ENCODE measurements at regions of chr12 and their contacts with region 1.

Region 1: DNA sequence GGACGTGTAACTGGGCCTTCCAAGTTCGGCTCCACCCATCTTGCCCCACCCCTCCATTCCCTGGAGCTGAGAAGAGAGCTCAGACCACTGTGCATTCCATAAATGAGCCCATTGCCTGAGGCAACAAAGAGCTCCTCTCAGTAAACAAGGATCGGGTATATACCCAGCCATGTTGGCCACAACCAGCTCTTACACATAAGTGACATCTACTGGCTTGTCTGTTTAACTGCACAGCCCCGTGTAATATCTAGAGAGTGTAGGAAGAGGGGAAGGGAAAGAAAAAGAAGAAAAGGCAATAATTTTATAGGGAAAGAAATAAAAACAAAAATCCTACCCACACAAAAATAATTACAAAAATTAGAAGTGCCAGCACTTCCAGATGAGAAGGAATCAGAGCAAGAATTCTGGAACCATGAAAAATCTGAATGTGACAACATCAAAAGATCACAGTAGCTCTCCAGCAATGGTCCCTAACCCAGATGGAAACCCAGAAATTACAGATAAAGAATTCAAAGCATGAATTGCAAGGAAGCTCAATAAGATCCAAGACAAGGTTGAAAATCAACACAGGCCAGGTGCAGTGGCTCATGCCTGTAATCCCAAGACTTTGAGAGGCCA is 308.1 kb downstream of the RPAP3 start:
- DNase-seq: peak; percentile 73
- ATAC-seq: peak; percentile 78
- H3K4me3 ChIP-seq: peak overlapping the region in 3 of 5 experiments; percentile 15 to 39 (median 30)
- H3K4me3 Mint-ChIP-seq: peak overlapping the region; percentile 63
- H3K27ac ChIP-seq: peak overlapping the region; percentile 49 to 75
- H3K27ac Mint-ChIP-seq: peak overlapping the region; percentile 91
- H3K4me1 ChIP-seq: peaks cover 27 to 48% of the 10 kb centered on the region in 2 donors
- H3K4me1 Mint-ChIP-seq: peaks cover 72% of the 10 kb centered on the region
- H3K27me3 ChIP-seq: no peaks in the 10 kb centered on the region
- H3K27me3 Mint-ChIP-seq: no peaks in the 10 kb centered on the region
- CTCF ChIP-seq: peak; percentile 70

Region 2: GRCh38 chr12:46983393-46984266 is 414.1 kb before region 1 on chr12:
- CTCF ChIA-PET with region 1: no interaction called
- POLR2A ChIA-PET with region 1: no interaction called
- intact Hi-C with region 1: no loop called
- DNase-seq: peak; percentile 51
- ATAC-seq: peak; percentile 53
- H3K4me3 ChIP-seq: no peak overlapping the region
- H3K4me3 Mint-ChIP-seq: no peak overlapping the region
- H3K27ac ChIP-seq: no peak overlapping the region
- H3K27ac Mint-ChIP-seq: no peak overlapping the region
- H3K4me1 ChIP-seq: no peaks in the 10 kb centered on the region
- H3K4me1 Mint-ChIP-seq: peaks cover 7% of the 10 kb centered on the region
- H3K27me3 ChIP-seq: no peaks in the 10 kb centered on the region
- H3K27me3 Mint-ChIP-seq: peaks cover 23% of the 10 kb centered on the region
- CTCF ChIP-seq: peak; percentile 70

Region 3: DNA sequence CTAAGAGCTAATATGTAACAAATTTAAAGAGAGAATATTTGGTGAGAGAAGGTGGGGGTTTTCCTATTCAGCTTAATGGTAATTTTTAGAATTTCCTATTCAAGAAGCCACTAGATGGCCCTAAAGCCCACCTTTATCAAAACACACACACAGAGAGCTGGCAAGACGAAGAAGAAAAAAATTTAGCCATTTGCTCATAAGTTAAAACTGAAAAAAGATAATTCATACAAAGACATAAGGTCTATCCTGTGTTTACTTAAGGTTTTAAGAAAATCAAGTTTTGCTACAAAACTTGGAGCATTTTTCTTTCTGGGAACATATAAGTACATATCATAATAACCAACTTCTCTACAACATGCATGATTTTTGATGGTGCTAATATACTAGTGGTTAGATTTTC is 365.1 kb before region 1 on chr12:
- CTCF ChIA-PET with region 1: interaction called, 192 read pairs
- POLR2A ChIA-PET with region 1: interaction called, 4 read pairs
- intact Hi-C with region 1: loop called (anchors 1 kb)
- DNase-seq: peak; percentile 78
- ATAC-seq: peak; percentile 81
- H3K4me3 ChIP-seq: no peak overlapping the region
- H3K4me3 Mint-ChIP-seq: no peak overlapping the region
- H3K27ac ChIP-seq: no peak overlapping the region
- H3K27ac Mint-ChIP-seq: no peak overlapping the region
- H3K4me1 ChIP-seq: peaks cover 0 to 3% of the 10 kb centered on the region in 2 donors
- H3K4me1 Mint-ChIP-seq: peaks cover 8% of the 10 kb centered on the region
- H3K27me3 ChIP-seq: no peaks in the 10 kb centered on the region
- H3K27me3 Mint-ChIP-seq: no peaks in the 10 kb centered on the region
- CTCF ChIP-seq: peak; percentile 77

Region 4: GRCh38 chr12:47164724-47165439 is 232.9 kb before region 1 on chr12:
- CTCF ChIA-PET with region 1: interaction called, 4 read pairs
- POLR2A ChIA-PET with region 1: no interaction called
- intact Hi-C with region 1: loop called (anchors 1 kb)
- DNase-seq: no peak
- ATAC-seq: no peak
- H3K4me3 ChIP-seq: no peak overlapping the region
- H3K4me3 Mint-ChIP-seq: no peak overlapping the region
- H3K27ac ChIP-seq: no peak overlapping the region
- H3K27ac Mint-ChIP-seq: no peak overlapping the region
- H3K4me1 ChIP-seq: peaks cover 4 to 6% of the 10 kb centered on the region in 2 donors
- H3K4me1 Mint-ChIP-seq: peaks cover 7% of the 10 kb centered on the region
- H3K27me3 ChIP-seq: no peaks in the 10 kb centered on the region
- H3K27me3 Mint-ChIP-seq: no peaks in the 10 kb centered on the region
- CTCF ChIP-seq: no peak

Region 5: GRCh38 chr12:47216150-47216677 is 181.6 kb before region 1 on chr12:
- CTCF ChIA-PET with region 1: interaction called, 42 read pairs
- POLR2A ChIA-PET with region 1: interaction called, 11 read pairs
- intact Hi-C with region 1: loop called (anchors 1 kb)
- DNase-seq: peak; percentile 88
- ATAC-seq: peak; percentile 85
- H3K4me3 ChIP-seq: peak overlapping the region; percentile 56 to 80 (median 60)
- H3K4me3 Mint-ChIP-seq: peak overlapping the region; percentile 90
- H3K27ac ChIP-seq: peak overlapping the region; percentile 78 to 89
- H3K27ac Mint-ChIP-seq: peak overlapping the region; percentile 92
- H3K4me1 ChIP-seq: peaks cover 63 to 73% of the 10 kb centered on the region in 2 donors
- H3K4me1 Mint-ChIP-seq: peaks cover 56% of the 10 kb centered on the region
- H3K27me3 ChIP-seq: no peaks in the 10 kb centered on the region
- H3K27me3 Mint-ChIP-seq: no peaks in the 10 kb centered on the region
- CTCF ChIP-seq: no peak

Region 6: GRCh38 chr12:47307680-47308399 is 89.9 kb before region 1 on chr12:
- CTCF ChIA-PET with region 1: interaction called, 66 read pairs
- POLR2A ChIA-PET with region 1: interaction called, 4 read pairs
- intact Hi-C with region 1: loop called (anchors 1 kb)
- DNase-seq: peak; percentile 84
- ATAC-seq: peak; percentile 84
- H3K4me3 ChIP-seq: peak overlapping the region; percentile 64 to 90 (median 73)
- H3K4me3 Mint-ChIP-seq: peak overlapping the region; percentile 94
- H3K27ac ChIP-seq: peak overlapping the region; percentile 73 to 74
- H3K27ac Mint-ChIP-seq: peak overlapping the region; percentile 90
- H3K4me1 ChIP-seq: peaks cover 10 to 29% of the 10 kb centered on the region in 2 donors
- H3K4me1 Mint-ChIP-seq: peaks cover 53% of the 10 kb centered on the region
- H3K27me3 ChIP-seq: no peaks in the 10 kb centered on the region
- H3K27me3 Mint-ChIP-seq: no peaks in the 10 kb centered on the region
- CTCF ChIP-seq: peak; percentile 76

Region 7: DNA sequence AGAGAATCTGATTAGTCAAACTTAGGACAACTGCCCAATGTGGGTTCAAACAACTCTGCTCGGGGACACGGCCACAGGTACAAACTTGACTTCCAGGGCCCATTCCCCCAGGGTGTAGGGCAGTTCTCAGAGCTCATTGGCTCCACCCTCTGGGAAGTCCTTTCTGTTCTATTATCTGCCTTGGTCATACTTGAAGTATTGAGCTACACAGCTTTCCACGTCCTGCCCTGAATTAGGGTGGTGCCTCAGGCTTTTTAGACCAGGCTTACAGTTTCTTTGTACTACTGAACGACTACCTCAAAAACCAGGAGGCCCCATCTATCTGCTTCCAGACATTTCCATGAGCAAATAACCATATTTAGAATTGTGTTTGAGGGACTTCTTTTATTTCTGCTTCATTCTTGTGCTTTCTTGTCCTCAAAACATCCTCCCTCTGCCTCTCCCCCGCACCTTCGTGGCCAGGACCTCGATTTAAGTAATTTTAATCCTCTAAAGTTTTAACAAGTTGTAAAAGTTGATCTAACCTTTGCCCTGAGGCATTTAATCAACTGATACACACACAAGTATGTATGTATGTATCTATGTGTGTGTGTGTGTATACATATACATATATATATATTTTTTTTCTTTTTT is 36.3 kb before region 1 on chr12:
- CTCF ChIA-PET with region 1: interaction called, 12 read pairs
- POLR2A ChIA-PET with region 1: interaction called, 7 read pairs
- intact Hi-C with region 1: loop called (anchors 2 kb)
- DNase-seq: peak; percentile 76
- ATAC-seq: peak; percentile 51
- H3K4me3 ChIP-seq: peak overlapping the region; percentile 24 to 52 (median 47)
- H3K4me3 Mint-ChIP-seq: peak overlapping the region; percentile 87
- H3K27ac ChIP-seq: peak overlapping the region; percentile 93 to 96
- H3K27ac Mint-ChIP-seq: peak overlapping the region; percentile 98
- H3K4me1 ChIP-seq: peaks cover 71% of the 10 kb centered on the region in 2 donors
- H3K4me1 Mint-ChIP-seq: peaks cover 62% of the 10 kb centered on the region
- H3K27me3 ChIP-seq: no peaks in the 10 kb centered on the region
- H3K27me3 Mint-ChIP-seq: no peaks in the 10 kb centered on the region
- CTCF ChIP-seq: no peak

Region 8: GRCh38 chr12:47413806-47414205 is 16.0 kb after region 1 on chr12:
- CTCF ChIA-PET with region 1: interaction called, 26 read pairs
- POLR2A ChIA-PET with region 1: no interaction called
- intact Hi-C with region 1: no loop called
- DNase-seq: peak; percentile 2
- ATAC-seq: no peak
- H3K4me3 ChIP-seq: no peak overlapping the region
- H3K4me3 Mint-ChIP-seq: no peak overlapping the region
- H3K27ac ChIP-seq: no peak overlapping the region
- H3K27ac Mint-ChIP-seq: peak overlapping the region; percentile 33
- H3K4me1 ChIP-seq: no peaks in the 10 kb centered on the region
- H3K4me1 Mint-ChIP-seq: peaks cover 11% of the 10 kb centered on the region
- H3K27me3 ChIP-seq: no peaks in the 10 kb centered on the region
- H3K27me3 Mint-ChIP-seq: no peaks in the 10 kb centered on the region
- CTCF ChIP-seq: no peak

Region 9: GRCh38 chr12:48263617-48264016 is 865.8 kb after region 1 on chr12:
- CTCF ChIA-PET with region 1: no interaction called
- POLR2A ChIA-PET with region 1: no interaction called
- intact Hi-C with region 1: no loop called
- DNase-seq: peak; percentile 13
- ATAC-seq: no peak
- H3K4me3 ChIP-seq: no peak overlapping the region
- H3K4me3 Mint-ChIP-seq: no peak overlapping the region
- H3K27ac ChIP-seq: no peak overlapping the region
- H3K27ac Mint-ChIP-seq: no peak overlapping the region
- H3K4me1 ChIP-seq: peaks cover 3 to 22% of the 10 kb centered on the region in 2 donors
- H3K4me1 Mint-ChIP-seq: peaks cover 25% of the 10 kb centered on the region
- H3K27me3 ChIP-seq: no peaks in the 10 kb centered on the region
- H3K27me3 Mint-ChIP-seq: peaks cover under 1% of the 10 kb centered on the region
- CTCF ChIP-seq: no peak

Measured in B cell (primary cell).